Astrocyte of the cerebellum (primary cell): ENCODE measurements at regions of chr3 and their contacts with region 1.

Region 1: GRCh38 chr3:183122257-183122932 is 23.1 kb upstream of the MCCC1 start:
- DNase-seq: peak; percentile 38
- H3K4me3 ChIP-seq: no peak overlapping the region
- CTCF ChIP-seq: peak; percentile 63

Region 2: GRCh38 chr3:183178629-183179549 is 56.5 kb after region 1 on chr3:
- in situ Hi-C with region 1: loop called (anchors 5 kb)
- DNase-seq: no peak
- H3K4me3 ChIP-seq: peak overlapping the region; percentile 53
- CTCF ChIP-seq: no peak